Activated naive CD4-positive, alpha-beta T cell treated with anti-CD3 and anti-CD28 coated beads for 36 hours (primary cell): ENCODE measurements at regions of chr14 and their contacts with region 1.

Region 1: GRCh38 chr14:61475316-61475715 is 153.9 kb downstream of the PRKCH start:
- DNase-seq: no peak
- H3K4me3 Mint-ChIP-seq: peak overlapping the region; percentile 38
- H3K27ac Mint-ChIP-seq: peak overlapping the region; percentile 100
- H3K4me1 Mint-ChIP-seq: peaks cover 88% of the 10 kb centered on the region
- H3K27me3 Mint-ChIP-seq: no peaks in the 10 kb centered on the region

Region 2: DNA sequence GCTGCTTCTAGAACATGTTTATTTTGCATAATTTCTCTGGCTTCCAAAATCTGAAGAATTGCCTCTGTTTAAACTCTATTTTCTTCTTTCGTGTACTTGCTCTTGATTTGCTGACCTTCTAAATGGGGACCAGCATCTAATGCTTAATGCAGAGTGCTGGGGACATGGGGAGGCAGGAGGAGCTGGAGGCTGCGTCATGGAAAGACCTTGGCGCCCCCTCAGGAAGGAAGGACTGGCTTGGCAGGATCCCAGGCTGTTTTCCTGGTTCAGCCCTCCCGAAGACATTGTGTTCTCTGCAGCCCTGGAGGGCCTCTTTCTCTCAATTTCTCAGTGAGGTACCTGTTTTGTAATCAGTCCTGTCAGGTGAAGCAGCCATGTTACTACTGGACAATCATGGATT is 148.5 kb before region 1 on chr14:
- CTCF ChIA-PET with region 1: interaction called, 4 read pairs
- intact Hi-C with region 1: loop called (anchors 1 kb)
- DNase-seq: no peak
- H3K4me3 Mint-ChIP-seq: peak overlapping the region; percentile 63
- H3K27ac Mint-ChIP-seq: peak overlapping the region; percentile 95
- H3K4me1 Mint-ChIP-seq: peaks cover 70% of the 10 kb centered on the region
- H3K27me3 Mint-ChIP-seq: no peaks in the 10 kb centered on the region

Region 3: DNA sequence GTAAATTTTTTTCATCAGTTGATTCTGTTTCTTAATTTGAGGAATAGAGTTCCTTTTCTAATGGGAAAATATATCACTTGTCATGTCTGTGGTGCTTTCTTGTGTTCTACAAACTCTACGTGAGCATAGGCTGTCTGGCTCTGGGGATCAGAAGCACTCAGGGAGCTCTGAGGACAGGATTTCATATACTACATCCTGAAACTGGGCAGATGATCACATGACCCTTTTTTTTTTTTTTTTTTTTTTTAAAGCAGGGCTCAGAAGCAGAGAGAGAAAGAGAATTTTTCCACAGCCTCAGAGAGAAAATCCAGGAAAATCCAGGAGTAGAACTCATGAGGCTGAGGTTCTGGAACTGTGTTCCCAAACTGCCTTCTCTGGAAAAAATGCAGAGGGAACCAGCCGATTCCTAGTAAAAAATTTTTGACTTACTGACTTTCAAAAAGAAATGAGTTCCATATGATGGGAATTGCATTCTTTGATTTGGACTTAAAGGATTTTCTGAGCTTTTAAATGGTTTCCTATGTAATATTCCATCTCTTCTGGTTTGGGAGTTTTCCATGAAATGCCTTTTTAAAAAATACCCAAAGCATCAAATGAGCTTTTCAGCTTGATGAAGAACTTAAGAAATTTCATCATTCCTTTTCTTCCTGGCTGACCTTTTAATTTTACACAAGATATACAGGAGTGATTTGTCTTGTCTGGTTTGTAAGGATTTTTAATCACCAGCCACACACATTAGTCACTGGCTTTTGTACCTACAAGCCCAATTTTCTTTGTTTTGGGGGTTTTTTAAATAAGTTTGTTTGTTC is 36.9 kb after region 1 on chr14:
- CTCF ChIA-PET with region 1: interaction called, 130 read pairs
- intact Hi-C with region 1: no loop called
- DNase-seq: peak; percentile 46
- H3K4me3 Mint-ChIP-seq: peak overlapping the region; percentile 56
- H3K27ac Mint-ChIP-seq: peak overlapping the region; percentile 100
- H3K4me1 Mint-ChIP-seq: peaks cover 95% of the 10 kb centered on the region
- H3K27me3 Mint-ChIP-seq: no peaks in the 10 kb centered on the region

Region 4: GRCh38 chr14:61568572-61569131 is 93.3 kb after region 1 on chr14:
- CTCF ChIA-PET with region 1: interaction called, 8 read pairs
- intact Hi-C with region 1: loop called (anchors 1 kb)
- DNase-seq: peak; percentile 71
- H3K4me3 Mint-ChIP-seq: peak overlapping the region; percentile 73
- H3K27ac Mint-ChIP-seq: peak overlapping the region; percentile 91
- H3K4me1 Mint-ChIP-seq: peaks cover 87% of the 10 kb centered on the region
- H3K27me3 Mint-ChIP-seq: no peaks in the 10 kb centered on the region

Region 5: DNA sequence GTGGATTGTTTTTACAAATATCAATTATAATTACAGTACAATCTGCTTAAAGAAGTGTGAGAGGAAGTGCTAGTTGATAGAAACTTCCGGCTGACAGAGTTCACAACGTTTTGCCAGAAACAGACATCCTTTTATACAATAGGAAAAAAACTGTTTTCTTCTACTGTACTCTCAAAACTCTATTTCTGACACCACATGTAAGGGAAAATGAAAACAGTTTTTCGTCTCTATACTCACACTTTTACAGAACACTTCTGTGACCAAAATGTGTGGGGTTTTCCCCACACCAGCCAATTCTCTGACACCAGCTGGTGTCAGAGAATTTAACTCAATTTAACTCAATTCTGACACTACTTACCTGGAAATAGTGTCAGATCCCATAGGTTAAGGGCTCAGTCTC is 195.8 kb after region 1 on chr14:
- CTCF ChIA-PET with region 1: interaction called, 9 read pairs
- intact Hi-C with region 1: loop called (anchors 1 kb)
- DNase-seq: peak; percentile 69
- H3K4me3 Mint-ChIP-seq: peak overlapping the region; percentile 35
- H3K27ac Mint-ChIP-seq: no peak overlapping the region
- H3K4me1 Mint-ChIP-seq: peaks cover 25% of the 10 kb centered on the region
- H3K27me3 Mint-ChIP-seq: no peaks in the 10 kb centered on the region

Region 6: DNA sequence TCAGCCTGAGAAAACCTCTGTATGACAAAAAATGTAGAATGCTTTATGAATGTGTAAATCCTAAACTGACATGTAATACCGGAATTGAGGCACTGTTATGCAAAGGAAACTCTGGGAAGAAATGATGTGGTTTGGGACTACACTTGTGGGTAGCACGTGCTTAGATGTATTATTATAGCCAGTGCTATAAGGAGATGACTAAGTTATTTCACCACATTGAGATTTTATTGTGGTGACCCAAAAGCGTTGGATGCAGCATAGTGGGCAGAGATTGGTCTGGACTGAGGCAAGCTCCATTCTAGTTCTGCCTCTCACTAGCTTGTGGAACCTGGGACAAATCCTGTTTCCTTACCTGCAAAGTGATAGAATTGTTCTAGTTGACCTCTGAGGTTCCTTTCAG is 459.1 kb after region 1 on chr14:
- CTCF ChIA-PET with region 1: no interaction called
- intact Hi-C with region 1: loop called (anchors 2 kb)
- DNase-seq: peak; percentile 31
- H3K4me3 Mint-ChIP-seq: no peak overlapping the region
- H3K27ac Mint-ChIP-seq: no peak overlapping the region
- H3K4me1 Mint-ChIP-seq: peaks cover 8% of the 10 kb centered on the region
- H3K27me3 Mint-ChIP-seq: peaks cover 27% of the 10 kb centered on the region